A673 (cell line): ENCODE measurements at regions of chr5 and their contacts with region 1.

Region 1: GRCh38 chr5:173618927-173619519 is 2.6 kb upstream of the BOD1 start:
- DNase-seq: peak; percentile 50
- H3K4me3 ChIP-seq: no peak overlapping the region
- H3K27ac ChIP-seq: no peak overlapping the region
- H3K4me1 ChIP-seq: peaks cover 19% of the 10 kb centered on the region
- H3K27me3 ChIP-seq: no peaks in the 10 kb centered on the region
- CTCF ChIP-seq: peak; percentile 66

Region 2: DNA sequence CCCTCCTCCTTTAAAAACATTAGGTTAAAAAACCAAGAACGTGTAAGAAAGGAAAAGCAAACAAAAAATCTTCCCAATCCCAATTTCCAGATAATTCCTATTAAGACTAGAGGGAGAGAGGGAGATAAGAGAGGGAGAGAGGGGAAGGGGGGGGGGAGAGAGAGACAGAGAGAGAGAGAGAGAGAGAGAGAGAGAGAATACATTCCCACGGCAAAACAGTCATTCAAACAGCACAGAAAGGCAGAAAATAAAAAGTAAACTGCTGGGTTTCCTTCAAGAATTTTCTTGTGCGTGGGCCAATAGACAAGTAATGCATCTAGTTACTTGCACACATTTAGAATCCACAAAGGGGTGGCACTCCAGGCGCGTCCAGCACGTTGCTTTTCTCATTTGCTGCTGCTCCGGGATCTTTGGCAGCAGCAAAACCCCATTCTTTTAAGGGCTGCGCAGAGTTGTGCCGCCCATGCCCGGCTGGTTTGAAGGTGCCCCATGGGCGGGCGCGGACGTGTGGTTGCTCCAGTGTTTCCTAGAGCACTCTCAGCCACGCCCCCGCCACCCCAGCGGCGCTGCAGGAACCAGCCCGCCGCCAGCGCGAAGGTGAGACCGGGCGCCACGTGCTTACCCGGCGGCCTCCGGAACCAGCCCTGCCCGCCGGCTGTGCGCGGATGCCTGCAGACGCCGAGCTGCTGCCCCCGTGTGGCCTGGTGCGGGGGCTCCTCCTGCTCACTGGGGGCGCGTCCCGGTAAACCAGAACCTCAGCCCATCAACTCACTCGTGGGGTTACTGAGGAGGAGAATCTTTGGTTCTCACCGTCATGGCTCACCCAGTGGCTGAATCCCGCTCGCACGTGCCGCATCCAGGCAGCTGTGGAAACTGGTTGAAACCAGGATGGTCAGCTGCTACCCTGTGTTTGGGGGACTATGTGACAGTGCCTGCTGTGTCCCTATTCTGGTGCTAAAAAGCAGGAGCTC is 335.4 kb before region 1 on chr5:
- CTCF ChIA-PET with region 1: no interaction called
- POLR2A ChIA-PET with region 1: no interaction called
- intact Hi-C with region 1: no loop called
- DNase-seq: peak; percentile 80
- H3K4me3 ChIP-seq: peak overlapping the region; percentile 17
- H3K27ac ChIP-seq: no peak overlapping the region
- H3K4me1 ChIP-seq: no peaks in the 10 kb centered on the region
- H3K27me3 ChIP-seq: no peaks in the 10 kb centered on the region
- CTCF ChIP-seq: peak; percentile 75

Region 3: DNA sequence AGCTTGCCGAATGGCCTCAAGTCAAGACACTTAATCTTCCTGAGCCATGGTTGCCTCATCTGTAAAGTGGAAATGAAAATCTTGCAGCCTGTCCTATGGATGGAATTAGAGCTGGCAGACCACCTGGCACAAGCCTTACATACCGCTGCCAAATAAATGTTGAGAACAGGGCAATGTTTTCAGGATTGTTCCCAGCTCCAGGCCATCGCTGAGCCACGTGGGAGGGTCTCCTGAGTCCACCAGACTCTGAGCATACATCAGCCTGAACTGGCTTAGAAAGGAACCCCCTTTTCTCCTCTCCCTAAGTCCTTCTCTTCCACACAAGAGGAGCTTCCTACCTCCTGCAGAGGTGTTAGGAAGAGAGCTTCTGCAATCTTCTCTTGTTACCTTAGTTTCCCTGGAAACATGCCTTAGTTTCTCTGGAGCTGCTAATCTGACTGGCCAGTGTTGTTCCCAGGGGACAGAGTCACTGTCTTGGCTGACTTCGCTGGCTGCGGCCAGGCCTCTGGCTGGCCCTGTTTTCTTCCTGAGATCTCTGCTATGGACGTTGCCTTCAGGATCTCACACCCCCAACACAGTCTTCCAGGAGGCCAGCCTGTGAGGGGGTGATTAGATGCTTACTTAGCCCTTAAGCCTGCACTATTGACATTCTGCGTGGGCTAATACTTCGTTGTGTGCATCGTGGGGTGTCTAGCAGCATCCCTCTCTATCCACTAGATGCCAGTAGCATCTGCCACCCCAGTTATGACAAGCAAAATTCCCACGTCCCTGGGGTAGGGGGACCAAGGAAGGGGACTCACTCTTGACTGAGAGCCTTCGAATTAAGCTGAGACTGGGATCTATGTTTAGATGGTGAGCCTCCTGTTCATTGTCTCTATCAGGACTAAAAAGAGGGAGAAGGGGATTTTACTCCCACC is 64.7 kb before region 1 on chr5:
- CTCF ChIA-PET with region 1: no interaction called
- POLR2A ChIA-PET with region 1: no interaction called
- intact Hi-C with region 1: no loop called
- DNase-seq: no peak
- H3K4me3 ChIP-seq: no peak overlapping the region
- H3K27ac ChIP-seq: no peak overlapping the region
- H3K4me1 ChIP-seq: no peaks in the 10 kb centered on the region
- H3K27me3 ChIP-seq: no peaks in the 10 kb centered on the region
- CTCF ChIP-seq: no peak

Region 4: DNA sequence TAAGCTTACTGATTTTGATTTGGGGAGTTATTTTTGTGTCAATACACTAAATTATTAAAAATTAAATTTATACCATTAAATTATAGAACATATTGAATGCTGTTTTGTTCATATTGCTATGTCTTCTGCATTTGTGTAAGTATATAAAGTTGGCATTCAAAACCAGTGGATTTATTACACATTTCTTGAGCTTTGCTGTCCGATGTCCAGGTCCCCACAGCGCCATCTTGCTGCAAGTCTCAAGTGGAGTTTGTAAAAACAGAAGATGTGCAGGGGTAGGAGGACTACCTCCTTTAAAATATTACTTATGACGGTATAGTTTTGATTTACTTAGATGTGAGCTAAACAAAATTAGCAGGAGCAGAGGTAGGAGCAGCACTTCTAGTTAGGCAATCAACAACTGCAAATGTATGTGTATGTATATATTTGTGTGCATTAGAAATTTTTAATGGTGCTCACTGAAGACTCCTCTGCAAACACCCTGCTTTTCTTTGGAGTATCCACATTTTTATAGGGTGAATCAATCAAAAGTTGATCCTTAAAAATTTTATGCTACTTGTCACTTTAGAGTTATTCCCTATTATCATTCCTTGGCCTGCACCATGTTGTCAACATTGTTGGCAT is 306.5 kb after region 1 on chr5:
- CTCF ChIA-PET with region 1: interaction called, 6 read pairs
- POLR2A ChIA-PET with region 1: no interaction called
- intact Hi-C with region 1: loop called (anchors 1 kb)
- DNase-seq: peak; percentile 38
- H3K4me3 ChIP-seq: no peak overlapping the region
- H3K27ac ChIP-seq: no peak overlapping the region
- H3K4me1 ChIP-seq: no peaks in the 10 kb centered on the region
- H3K27me3 ChIP-seq: no peaks in the 10 kb centered on the region
- CTCF ChIP-seq: peak; percentile 68

Region 5: GRCh38 chr5:173972925-173973615 is 354.0 kb after region 1 on chr5:
- CTCF ChIA-PET with region 1: interaction called, 8 read pairs
- POLR2A ChIA-PET with region 1: no interaction called
- intact Hi-C with region 1: loop called (anchors 1 kb)
- DNase-seq: peak; percentile 72
- H3K4me3 ChIP-seq: peak overlapping the region; percentile 31
- H3K27ac ChIP-seq: no peak overlapping the region
- H3K4me1 ChIP-seq: no peaks in the 10 kb centered on the region
- H3K27me3 ChIP-seq: no peaks in the 10 kb centered on the region
- CTCF ChIP-seq: peak; percentile 79

Region 6: DNA sequence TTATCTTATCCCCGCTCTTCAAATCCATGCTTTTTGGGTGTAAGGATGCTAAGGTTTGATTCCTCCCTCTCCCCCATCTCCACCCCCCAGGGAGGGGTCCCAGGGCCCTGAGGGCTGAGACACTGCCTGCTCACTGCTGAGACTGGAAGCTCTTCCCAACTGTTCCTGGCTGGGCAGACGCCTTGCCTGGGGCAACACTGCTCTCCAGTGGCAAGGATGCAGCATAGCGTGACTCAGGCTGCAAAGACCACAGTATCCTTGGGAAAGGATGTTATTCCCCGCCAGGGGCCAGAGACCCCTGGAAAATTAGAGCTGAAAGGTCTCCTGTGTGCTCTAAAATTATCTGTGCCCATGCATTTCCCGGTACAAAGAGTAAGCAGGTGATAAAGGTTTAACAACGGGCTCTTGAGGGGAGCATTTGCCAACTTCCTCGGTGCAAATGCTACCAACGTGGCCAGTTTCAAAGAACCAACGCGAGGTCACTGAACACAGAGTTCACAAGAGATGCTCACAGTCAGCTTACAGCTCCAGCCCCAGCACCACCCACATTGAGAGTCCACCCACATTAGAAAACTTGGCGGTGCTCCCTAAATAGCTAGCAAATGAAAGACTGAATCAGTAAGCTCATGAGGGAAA is 698.4 kb after region 1 on chr5:
- CTCF ChIA-PET with region 1: no interaction called
- POLR2A ChIA-PET with region 1: no interaction called
- intact Hi-C with region 1: loop called (anchors 2 kb)
- DNase-seq: peak; percentile 45
- H3K4me3 ChIP-seq: no peak overlapping the region
- H3K27ac ChIP-seq: no peak overlapping the region
- H3K4me1 ChIP-seq: no peaks in the 10 kb centered on the region
- H3K27me3 ChIP-seq: peaks cover 10% of the 10 kb centered on the region
- CTCF ChIP-seq: peak; percentile 70